Breast epithelium (tissue), 4 donors: ENCODE measurements at regions of chr21 and their contacts with region 1.

Region 1: DNA sequence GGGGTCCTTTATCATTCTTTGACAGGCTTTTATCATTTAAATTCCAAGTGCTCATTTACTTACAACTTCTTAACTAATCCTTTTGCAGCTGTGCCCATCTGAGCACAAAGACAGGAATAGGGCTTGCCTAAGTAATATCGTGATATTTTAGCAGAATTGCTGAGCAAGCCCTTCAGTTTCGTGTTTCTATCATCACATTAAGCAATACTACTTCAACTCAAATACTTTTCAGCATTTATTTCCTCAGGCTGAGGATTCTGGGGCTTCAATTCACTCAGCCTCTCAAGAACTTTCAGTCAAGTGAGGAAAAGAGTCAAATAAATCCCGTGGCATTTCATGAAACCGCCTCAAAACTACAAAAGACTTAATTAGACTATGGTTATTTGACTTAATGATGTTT is 317.6 kb downstream of the BACH1 start:
- DNase-seq: no peak
- H3K4me3 ChIP-seq: no peak overlapping the region
- H3K27ac ChIP-seq: no peak overlapping the region
- H3K4me1 ChIP-seq: no peaks in the 10 kb centered on the region
- H3K27me3 ChIP-seq: no peaks in the 10 kb centered on the region
- CTCF ChIP-seq: no peak
- POLR2A ChIP-seq: no peak

Region 2: DNA sequence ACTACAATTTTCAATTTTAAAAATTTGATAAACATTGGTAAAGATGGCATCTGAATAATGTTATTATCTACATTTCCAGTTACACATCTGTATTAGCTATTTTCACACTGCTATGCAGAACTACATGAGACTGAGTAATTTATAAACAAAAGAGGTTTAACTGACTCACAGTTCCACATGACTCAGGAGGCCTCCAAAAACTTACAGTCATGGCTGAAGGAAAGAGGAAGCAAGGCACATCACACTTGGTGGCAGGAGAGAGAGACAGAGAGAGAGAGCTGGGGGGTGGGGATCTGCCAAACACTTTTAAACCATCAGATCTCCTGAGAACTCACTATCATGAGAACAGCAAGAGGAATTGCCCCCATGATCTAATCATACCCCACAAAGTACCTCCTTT is 1473.7 kb before region 1 on chr21:
- intact Hi-C with region 1: no loop called
- DNase-seq: no peak
- H3K4me3 ChIP-seq: no peak overlapping the region
- H3K27ac ChIP-seq: peak overlapping the region in 1 of 2 donors; percentile 15
- H3K4me1 ChIP-seq: no peaks in the 10 kb centered on the region
- H3K27me3 ChIP-seq: no peaks in the 10 kb centered on the region
- CTCF ChIP-seq: no peak
- POLR2A ChIP-seq: no peak

Region 3: GRCh38 chr21:29546071-29546470 is 70.3 kb before region 1 on chr21:
- intact Hi-C with region 1: no loop called
- DNase-seq: no peak
- H3K4me3 ChIP-seq: no peak overlapping the region
- H3K27ac ChIP-seq: no peak overlapping the region
- H3K4me1 ChIP-seq: no peaks in the 10 kb centered on the region
- H3K27me3 ChIP-seq: no peaks in the 10 kb centered on the region
- CTCF ChIP-seq: no peak
- POLR2A ChIP-seq: no peak

Region 4: DNA sequence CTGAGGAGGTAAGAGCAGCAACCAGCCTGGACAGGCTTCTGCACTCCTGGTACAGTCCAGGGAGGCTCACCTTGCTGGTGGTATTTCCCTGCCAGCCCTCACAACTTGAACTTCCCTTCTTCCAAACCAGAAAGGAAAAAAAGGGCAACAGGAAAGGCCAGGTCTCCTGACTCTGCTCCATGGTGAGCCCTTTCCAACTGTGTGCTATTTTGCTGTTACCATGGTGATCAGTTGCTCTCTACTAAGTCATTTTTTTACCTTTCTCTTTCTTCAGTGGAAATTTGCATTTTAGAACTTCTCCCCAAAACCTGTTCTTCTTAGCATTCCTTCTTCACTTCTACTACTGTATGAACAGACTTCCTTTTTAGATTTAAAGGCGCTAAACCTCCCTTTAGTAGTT is 159.1 kb after region 1 on chr21:
- intact Hi-C with region 1: no loop called
- DNase-seq: no peak
- H3K4me3 ChIP-seq: no peak overlapping the region
- H3K27ac ChIP-seq: no peak overlapping the region
- H3K4me1 ChIP-seq: no peaks in the 10 kb centered on the region
- H3K27me3 ChIP-seq: no peaks in the 10 kb centered on the region
- CTCF ChIP-seq: no peak
- POLR2A ChIP-seq: no peak

Region 5: DNA sequence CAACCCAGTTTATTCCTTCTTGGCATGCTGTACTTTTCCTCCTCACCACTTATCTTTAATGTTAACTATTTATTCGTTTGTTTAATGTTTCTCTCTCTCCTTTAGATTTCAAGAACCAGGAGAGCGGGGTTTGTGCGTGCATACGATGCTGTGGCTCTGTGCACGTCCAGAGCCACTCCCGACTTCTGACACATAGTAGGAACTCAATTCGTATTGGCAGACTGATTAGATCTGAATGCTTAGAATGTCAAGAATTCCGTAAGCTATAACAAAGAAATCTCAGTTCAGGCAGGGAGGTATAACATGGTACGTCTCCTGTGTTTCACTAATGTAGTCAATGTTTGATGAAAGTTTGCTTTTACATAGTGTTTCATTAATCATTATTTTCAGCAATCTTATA is 330.8 kb after region 1 on chr21:
- intact Hi-C with region 1: loop called (anchors 5 kb)
- DNase-seq: no peak
- H3K4me3 ChIP-seq: no peak overlapping the region
- H3K27ac ChIP-seq: no peak overlapping the region
- H3K4me1 ChIP-seq: no peaks in the 10 kb centered on the region
- H3K27me3 ChIP-seq: peaks cover 0 to 1% of the 10 kb centered on the region in 2 donors
- CTCF ChIP-seq: no peak
- POLR2A ChIP-seq: no peak

Region 6: DNA sequence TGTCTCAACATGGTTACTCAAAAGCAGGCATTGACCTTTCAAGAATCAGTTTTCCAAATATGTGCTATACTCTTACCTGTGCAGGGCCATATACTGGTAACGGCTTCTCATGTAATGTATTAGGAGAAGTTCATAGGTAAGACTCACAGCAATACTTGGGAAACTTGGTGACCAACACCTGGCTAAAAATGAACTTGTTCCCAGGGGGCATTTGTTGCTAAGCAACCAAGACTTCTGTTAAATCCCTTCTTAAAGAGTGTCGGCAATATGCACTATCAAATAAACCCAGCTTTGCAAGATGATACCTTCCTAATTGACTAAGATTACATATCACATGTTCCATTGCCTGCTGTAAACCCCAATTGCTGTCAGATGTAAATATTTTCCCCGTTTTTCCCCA is 667.1 kb after region 1 on chr21:
- intact Hi-C with region 1: no loop called
- DNase-seq: no peak
- H3K4me3 ChIP-seq: no peak overlapping the region
- H3K27ac ChIP-seq: no peak overlapping the region
- H3K4me1 ChIP-seq: no peaks in the 10 kb centered on the region
- H3K27me3 ChIP-seq: no peaks in the 10 kb centered on the region
- CTCF ChIP-seq: no peak
- POLR2A ChIP-seq: no peak